Endothelial cell of umbilical vein (primary cell): ENCODE measurements at regions of chr12 and their contacts with region 1.

Region 1: DNA sequence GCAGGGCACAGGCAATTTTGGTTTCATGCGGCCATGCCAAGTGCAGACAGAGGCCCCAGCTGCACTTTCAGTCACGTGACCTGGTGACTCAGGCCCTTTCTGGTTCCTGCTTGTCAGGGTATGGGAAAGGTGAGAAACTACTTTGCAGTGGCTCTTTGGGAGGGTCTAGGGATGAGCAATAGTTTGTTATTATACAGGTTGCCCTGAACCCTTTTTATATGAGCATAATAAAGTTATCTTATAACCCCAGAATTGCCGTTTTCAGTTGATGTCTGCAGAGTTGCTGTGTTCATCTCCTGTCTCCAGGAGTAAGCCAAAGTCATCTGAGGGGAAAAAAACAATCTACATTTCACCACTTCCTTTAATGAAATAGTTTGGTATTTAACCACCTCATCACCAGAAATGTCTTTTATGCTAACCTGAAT is 30.9 kb upstream of the EMP1 start:
- DNase-seq: peak; percentile 85
- H3K4me3 ChIP-seq: no peak overlapping the region
- H3K27ac ChIP-seq: peak overlapping the region; percentile 54
- H3K4me1 ChIP-seq: peaks cover 34% of the 10 kb centered on the region
- H3K27me3 ChIP-seq: no peaks in the 10 kb centered on the region
- CTCF ChIP-seq: no peak
- POLR2A ChIP-seq: no peak

Region 2: GRCh38 chr12:12611512-12612306 is 553.9 kb before region 1 on chr12 and contains the start of gene CREBL2:
- CTCF ChIA-PET with region 1: no interaction called
- POLR2A ChIA-PET with region 1: no interaction called
- dilution Hi-C with region 1: no loop called
- intact Hi-C with region 1: no loop called
- DNase-seq: peak; percentile 98
- H3K4me3 ChIP-seq: peak within 1 kb of the TSS; percentile 75 to 86 (median 84)
- H3K27ac ChIP-seq: peak within 1 kb of the TSS; percentile 81
- H3K4me1 ChIP-seq: peaks cover 5% of the 10 kb centered on the region
- H3K27me3 ChIP-seq: no peaks in the 10 kb centered on the region
- CTCF ChIP-seq: no peak
- POLR2A ChIP-seq: peak; percentile 20
- total RNA-seq, gene CREBL2: 14.5 and 19.4 TPM in 2 replicates

Region 3: GRCh38 chr12:13196130-13196921 is 30.7 kb after region 1 on chr12 and contains the start of gene EMP1:
- CTCF ChIA-PET with region 1: interaction called, 3 read pairs
- POLR2A ChIA-PET with region 1: no interaction called
- dilution Hi-C with region 1: no loop called
- intact Hi-C with region 1: loop called (anchors 1 kb)
- DNase-seq: peak; percentile 99
- H3K4me3 ChIP-seq: peak within 1 kb of the TSS; percentile 85 to 99 (median 95)
- H3K27ac ChIP-seq: peak within 1 kb of the TSS; percentile 96
- H3K4me1 ChIP-seq: peaks cover 35% of the 10 kb centered on the region
- H3K27me3 ChIP-seq: no peaks in the 10 kb centered on the region
- CTCF ChIP-seq: no peak
- POLR2A ChIP-seq: peak; percentile 99
- total RNA-seq, gene EMP1: 528 and 577 TPM in 2 replicates